ENCODE measurements at regions of chr5 and their contacts with region 1.

Region 1: DNA sequence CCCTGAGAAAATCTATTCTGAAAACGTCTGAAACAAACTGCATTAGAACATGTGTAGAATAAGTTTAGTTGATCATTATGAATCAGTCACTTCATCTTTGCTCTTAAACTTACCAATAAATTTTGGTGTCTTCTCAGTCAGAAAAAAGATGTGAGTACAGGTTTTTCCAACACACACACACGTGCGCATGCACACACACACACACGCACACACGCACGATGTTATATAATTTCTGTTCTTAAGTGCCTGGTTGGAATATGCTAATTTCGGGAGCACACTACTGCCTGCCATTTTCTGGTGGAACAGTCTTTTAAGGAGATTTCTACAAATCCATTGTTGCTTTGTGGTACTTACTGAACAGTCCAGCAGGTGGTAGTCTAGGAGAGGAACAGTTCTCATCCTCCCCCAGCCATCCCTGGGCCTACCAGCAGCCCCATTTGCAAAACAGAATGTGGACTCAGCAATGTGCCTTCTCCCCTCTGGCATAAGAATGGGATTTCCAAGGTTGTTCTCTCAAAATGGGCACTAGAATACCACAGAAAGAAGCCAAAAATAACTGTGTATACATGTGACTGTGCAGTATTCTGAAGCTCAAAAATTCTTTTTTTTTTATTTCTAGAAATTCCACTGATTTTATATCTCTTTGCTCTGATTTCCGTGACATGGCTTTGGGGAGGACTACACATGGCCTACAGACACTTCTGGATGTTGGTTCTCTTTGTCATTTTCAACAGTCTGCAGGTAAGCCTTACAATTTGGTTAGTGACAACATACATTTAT is 281.3 kb downstream of the ARRDC3 start:
- DNase-seq: peak; percentile 61 to 65
- H3K4me3 ChIP-seq: no peak overlapping the region
- H3K27ac ChIP-seq: peak overlapping the region in 1 of 2 donors; percentile 8
- H3K4me1 ChIP-seq: no peaks in the 10 kb centered on the region
- H3K27me3 ChIP-seq: no peaks in the 10 kb centered on the region
- CTCF ChIP-seq: peak; percentile 89 to 92 (median 92)
- POLR2A ChIP-seq: no peak

Region 2: DNA sequence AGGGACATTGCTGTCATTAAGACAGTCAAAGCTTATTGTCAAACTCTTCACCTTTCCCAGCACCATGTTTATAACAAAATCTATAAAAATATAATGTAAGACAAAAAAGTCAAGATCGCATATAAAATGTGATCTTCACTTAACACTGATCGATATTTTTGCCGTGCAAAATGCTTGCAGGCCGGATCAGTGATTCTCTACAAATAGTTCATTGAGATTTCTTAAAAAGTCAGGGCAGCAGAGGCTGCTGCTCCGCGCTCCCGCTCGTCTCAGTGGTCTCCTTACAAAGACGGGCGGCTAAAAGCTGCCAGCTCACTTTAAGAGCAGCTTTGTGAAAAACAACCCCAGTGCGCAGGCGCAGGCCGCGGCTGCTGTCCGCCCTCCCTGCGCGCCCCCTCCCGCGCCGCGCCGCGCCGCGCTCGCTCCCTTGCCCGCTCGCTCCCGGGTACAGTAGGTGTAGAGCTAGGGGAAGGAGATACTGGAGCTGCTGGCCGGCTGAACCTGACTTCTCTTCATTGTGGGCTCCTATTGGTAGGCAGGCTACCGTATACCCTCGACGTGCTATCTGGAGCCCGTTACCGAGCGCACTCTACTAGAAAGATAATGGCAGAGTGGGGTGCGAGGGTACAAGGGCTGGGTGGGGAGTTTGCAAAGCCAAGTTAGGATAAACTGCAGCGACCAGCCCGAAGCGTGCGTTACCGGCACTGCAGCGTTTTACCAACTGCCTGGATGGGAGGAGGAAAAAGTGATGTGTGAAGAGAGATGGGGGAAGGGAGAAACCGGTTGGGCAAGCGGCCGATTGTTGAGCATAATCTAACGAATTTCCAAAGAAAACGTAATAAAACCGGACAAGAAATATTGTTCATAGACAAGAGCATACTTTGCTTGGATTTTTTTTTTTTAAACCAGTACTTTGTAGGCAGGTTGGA is 281.5 kb after region 1 on chr5 and contains the start of gene ARRDC3:
- intact Hi-C with region 1: loop called (anchors 10 kb)
- DNase-seq: peak; percentile 94 to 95
- H3K4me3 ChIP-seq: peak within 1 kb of the TSS; percentile 64 to 82 (median 73)
- H3K27ac ChIP-seq: peak within 1 kb of the TSS; percentile 99 to 100
- H3K4me1 ChIP-seq: peaks cover 0 to under 1% of the 10 kb centered on the region in 2 donors
- H3K27me3 ChIP-seq: no peaks in the 10 kb centered on the region
- CTCF ChIP-seq: peak in 1 of 3 donors; percentile 2
- POLR2A ChIP-seq: peak; percentile 76
- total RNA-seq, gene ARRDC3: 75.5 to 261 (median 100) TPM

Region 3: GRCh38 chr5:92313385-92313784 is 1211.6 kb after region 1 on chr5:
- intact Hi-C with region 1: no loop called
- DNase-seq: no peak
- H3K4me3 ChIP-seq: no peak overlapping the region
- H3K27ac ChIP-seq: no peak overlapping the region
- H3K4me1 ChIP-seq: no peaks in the 10 kb centered on the region
- H3K27me3 ChIP-seq: no peaks in the 10 kb centered on the region
- CTCF ChIP-seq: no peak
- POLR2A ChIP-seq: no peak